ENCODE measurements at regions of chr1 and their contacts with region 1.

Region 1: DNA sequence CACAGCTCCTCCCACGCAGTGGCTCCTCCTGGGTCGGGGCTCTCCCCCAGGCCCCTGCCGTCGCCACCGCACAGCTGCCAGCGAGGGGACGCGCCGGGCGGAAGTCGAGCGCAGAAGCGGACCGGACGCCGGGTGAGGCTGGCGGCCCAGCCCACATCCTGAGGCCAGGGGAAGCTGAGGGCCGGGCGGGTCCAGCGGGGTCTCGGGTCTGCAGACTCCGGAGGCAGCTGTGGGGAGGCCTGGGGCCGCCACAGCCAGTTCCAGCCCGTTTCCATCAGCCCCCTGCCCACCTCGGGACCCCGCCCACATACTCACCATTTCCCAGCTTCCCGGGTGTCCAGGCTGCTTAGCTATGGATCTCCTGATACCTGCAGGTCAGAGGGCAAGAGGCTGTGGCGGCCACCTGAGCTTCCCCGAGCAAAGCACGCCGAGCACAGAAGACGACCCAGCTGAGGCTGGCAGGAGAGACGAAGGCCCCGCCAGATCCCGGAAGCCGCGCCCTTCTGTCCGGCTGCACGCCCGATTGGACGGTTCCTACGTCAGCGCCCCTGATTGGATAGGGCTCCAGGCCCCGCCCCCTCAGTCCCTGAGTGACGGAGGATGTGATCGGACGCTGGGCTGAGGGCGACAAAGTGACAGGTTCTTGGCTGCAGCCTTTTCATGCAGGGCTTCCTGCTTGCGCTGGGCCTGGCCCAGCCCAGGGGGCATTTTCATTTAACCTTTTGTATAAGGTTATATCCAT is 38.7 kb upstream of the ZNF124 start:
- DNase-seq: peak; percentile 98 to 99 (median 99)
- ATAC-seq: peak; percentile 100
- H3K4me3 ChIP-seq: peak overlapping the region; percentile 53 to 100 (median 83)
- H3K27ac ChIP-seq: peak overlapping the region; percentile 83 to 95 (median 91)
- H3K4me1 ChIP-seq: peaks cover 3 to 37% (median 18%) of the 10 kb centered on the region in 12 donors
- H3K27me3 ChIP-seq: no peaks in the 10 kb centered on the region
- CTCF ChIP-seq: no peak
- POLR2A ChIP-seq: peak in 1 of 2 donors; percentile 78

Region 2: GRCh38 chr1:247007511-247008405 is 202.8 kb before region 1 on chr1 and contains the start of gene ZNF695:
- intact Hi-C with region 1: no loop called
- DNase-seq: peak; percentile 88 to 91 (median 90)
- ATAC-seq: peak; percentile 99 to 100 (median 100)
- H3K4me3 ChIP-seq: peak within 1 kb of the TSS; percentile 38 to 72 (median 59)
- H3K27ac ChIP-seq: no peak within 1 kb of the TSS
- H3K4me1 ChIP-seq: peaks cover 0 to 10% (median 0%) of the 10 kb centered on the region in 12 donors
- H3K27me3 ChIP-seq: peaks cover 0 to 26% (median 0%) of the 10 kb centered on the region in 9 donors
- CTCF ChIP-seq: no peak
- POLR2A ChIP-seq: no peak
- total RNA-seq, gene ZNF695: 0.06 to 0.53 TPM in 2 of 9 donors, not detected in the others

Region 3: DNA sequence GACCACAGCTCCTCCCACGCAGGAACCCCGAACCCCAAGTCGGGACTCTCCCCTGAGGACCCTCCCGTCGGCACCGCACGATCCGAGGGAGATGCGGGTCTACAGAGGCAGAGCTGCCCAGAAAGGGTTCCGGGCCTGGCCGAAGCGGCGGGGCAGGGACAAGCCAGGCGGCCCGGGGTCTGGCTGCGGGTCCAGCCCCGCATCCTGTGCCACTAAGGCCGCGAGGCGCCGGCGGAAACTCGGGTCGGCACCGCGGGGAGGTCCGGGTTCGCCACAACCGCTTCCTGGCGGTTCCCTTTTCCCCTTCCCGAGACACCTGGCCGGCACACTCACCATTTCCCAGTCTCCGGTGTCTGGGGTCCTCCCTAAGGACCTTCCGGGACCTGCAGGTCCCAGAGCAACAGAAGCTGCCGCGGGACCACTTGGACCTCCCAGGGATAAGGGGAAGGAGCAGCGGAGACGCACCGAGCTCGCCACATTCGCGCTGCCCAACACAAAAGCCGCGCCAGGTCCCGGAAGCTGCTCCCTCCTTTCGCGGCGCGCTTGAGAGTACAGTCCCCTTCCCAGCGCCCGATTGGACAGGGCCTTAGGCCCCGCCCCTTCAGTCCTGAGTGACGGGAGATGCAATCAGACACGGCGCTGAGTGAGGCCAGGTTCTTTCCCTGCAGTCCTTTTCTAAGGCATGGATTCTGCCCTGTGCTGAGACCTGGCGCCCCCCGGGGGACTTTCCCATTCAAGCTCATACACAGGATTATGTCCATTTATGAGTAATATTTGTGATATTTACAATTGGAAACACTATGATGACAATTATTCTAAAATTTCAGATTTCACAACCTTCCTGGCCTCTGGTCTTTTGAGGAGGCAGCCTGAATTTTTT is 132.0 kb before region 1 on chr1 and contains the start of gene ZNF670:
- intact Hi-C with region 1: loop called in 1 of 10 experiments (anchors 5 kb)
- DNase-seq: peak; percentile 95 to 97 (median 96)
- ATAC-seq: peak; percentile 100
- H3K4me3 ChIP-seq: peak within 1 kb of the TSS; percentile 74 to 98 (median 88)
- H3K27ac ChIP-seq: peak within 1 kb of the TSS; percentile 47 to 84 (median 72)
- H3K4me1 ChIP-seq: peaks cover 0 to 21% (median 11%) of the 10 kb centered on the region in 12 donors
- H3K27me3 ChIP-seq: no peaks in the 10 kb centered on the region
- CTCF ChIP-seq: peak in 2 of 12 donors; percentile 3 to 16
- POLR2A ChIP-seq: peak in 1 of 2 donors; percentile 70
- total RNA-seq, gene ZNF670: 0.60 to 3.6 (median 1.0) TPM

Region 4: GRCh38 chr1:247103859-247104591 is 106.5 kb before region 1 on chr1 and contains the start of gene ZNF669:
- intact Hi-C with region 1: loop called in 2 of 10 experiments (anchors 5 to 10 kb)
- DNase-seq: peak; percentile 96 to 98 (median 98)
- ATAC-seq: peak; percentile 100
- H3K4me3 ChIP-seq: peak within 1 kb of the TSS; percentile 63 to 97 (median 86)
- H3K27ac ChIP-seq: peak within 1 kb of the TSS; percentile 48 to 90 (median 79)
- H3K4me1 ChIP-seq: peaks cover 0 to 18% (median 14%) of the 10 kb centered on the region in 12 donors
- H3K27me3 ChIP-seq: no peaks in the 10 kb centered on the region
- CTCF ChIP-seq: no peak
- POLR2A ChIP-seq: peak in 1 of 2 donors; percentile 77
- total RNA-seq, gene ZNF669: 1.5 to 5.4 (median 3.2) TPM

Region 5: GRCh38 chr1:247111700-247112478 is 98.7 kb before region 1 on chr1:
- intact Hi-C with region 1: loop called in 2 of 10 experiments (anchors 5 to 10 kb)
- DNase-seq: peak; percentile 70 to 87 (median 79)
- ATAC-seq: peak; percentile 70 to 97 (median 92)
- H3K4me3 ChIP-seq: peak overlapping the region; percentile 51 to 89 (median 72)
- H3K27ac ChIP-seq: peak overlapping the region in 11 of 12 donors; percentile 61 to 88 (median 76)
- H3K4me1 ChIP-seq: peaks cover 0 to 26% (median 11%) of the 10 kb centered on the region in 12 donors
- H3K27me3 ChIP-seq: peaks cover 0 to 16% (median 0%) of the 10 kb centered on the region in 9 donors
- CTCF ChIP-seq: no peak
- POLR2A ChIP-seq: peak in 1 of 2 donors; percentile 55

Region 6: GRCh38 chr1:247172996-247173395 is 37.6 kb before region 1 on chr1:
- intact Hi-C with region 1: loop called in 1 of 10 experiments (anchors 2 kb)
- DNase-seq: no peak
- ATAC-seq: no peak
- H3K4me3 ChIP-seq: no peak overlapping the region
- H3K27ac ChIP-seq: peak overlapping the region in 1 of 12 donors; percentile 6
- H3K4me1 ChIP-seq: peaks cover 0 to 14% (median 0%) of the 10 kb centered on the region in 12 donors
- H3K27me3 ChIP-seq: no peaks in the 10 kb centered on the region
- CTCF ChIP-seq: no peak
- POLR2A ChIP-seq: no peak

Region 7: DNA sequence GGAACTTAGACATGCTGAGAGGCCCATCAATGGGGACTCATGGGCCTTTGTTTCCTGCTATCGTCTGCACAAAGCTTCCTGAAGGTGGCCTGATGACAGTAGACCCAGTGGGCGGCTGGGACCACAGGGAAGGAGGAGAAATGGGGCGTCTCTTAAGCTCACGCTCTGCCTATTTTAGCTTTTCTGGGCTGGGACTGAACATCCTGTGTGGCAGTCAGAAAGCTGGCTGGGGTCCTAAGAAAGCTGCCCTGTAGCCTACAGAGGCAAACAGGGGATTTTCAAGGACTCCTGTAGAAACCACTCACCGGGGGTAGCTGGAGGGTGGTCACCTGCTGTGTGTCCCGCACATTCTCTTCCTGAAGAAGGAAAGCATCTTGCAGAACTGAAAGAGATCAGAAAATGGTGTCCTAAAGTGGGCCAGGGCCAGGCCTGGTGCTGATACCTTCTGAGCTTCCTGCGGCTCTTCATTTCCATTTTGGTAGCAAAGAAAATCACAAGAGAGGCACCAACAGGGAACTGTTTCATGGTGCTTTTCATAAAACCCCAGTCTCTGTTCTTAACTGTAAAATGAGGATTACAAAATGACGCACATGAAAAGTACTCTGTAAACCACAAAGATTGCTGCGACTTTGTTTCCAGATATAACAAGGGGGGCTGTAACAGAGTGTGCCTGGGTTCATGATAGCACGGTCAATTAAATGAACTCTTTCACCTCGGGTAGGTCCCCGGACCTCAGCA is 112.5 kb after region 1 on chr1:
- intact Hi-C with region 1: loop called in 1 of 10 experiments (anchors 10 kb)
- DNase-seq: no peak
- ATAC-seq: peak in 1 of 4 donors; percentile 26
- H3K4me3 ChIP-seq: no peak overlapping the region
- H3K27ac ChIP-seq: no peak overlapping the region
- H3K4me1 ChIP-seq: peaks cover 0 to 6% (median 0%) of the 10 kb centered on the region in 12 donors
- H3K27me3 ChIP-seq: no peaks in the 10 kb centered on the region
- CTCF ChIP-seq: no peak
- POLR2A ChIP-seq: no peak

Region 8: GRCh38 chr1:247331172-247331991 is 120.8 kb after region 1 on chr1 and contains the start of gene ZNF496:
- intact Hi-C with region 1: loop called in 5 of 10 experiments (anchors 5 to 10 kb)
- DNase-seq: peak; percentile 87 to 89 (median 88)
- ATAC-seq: peak; percentile 68 to 86 (median 82)
- H3K4me3 ChIP-seq: peak within 1 kb of the TSS; percentile 81 to 99 (median 97)
- H3K27ac ChIP-seq: peak within 1 kb of the TSS; percentile 82 to 98 (median 94)
- H3K4me1 ChIP-seq: peaks cover 6 to 55% (median 38%) of the 10 kb centered on the region in 12 donors
- H3K27me3 ChIP-seq: no peaks in the 10 kb centered on the region
- CTCF ChIP-seq: no peak
- POLR2A ChIP-seq: peak in 1 of 2 donors; percentile 56
- total RNA-seq, gene ZNF496: 13.2 to 37.9 (median 16.5) TPM

Region 9: GRCh38 chr1:247812637-247813036 is 602.1 kb after region 1 on chr1:
- intact Hi-C with region 1: no loop called
- DNase-seq: no peak
- ATAC-seq: no peak
- H3K4me3 ChIP-seq: no peak overlapping the region
- H3K27ac ChIP-seq: no peak overlapping the region
- H3K4me1 ChIP-seq: no peaks in the 10 kb centered on the region
- H3K27me3 ChIP-seq: no peaks in the 10 kb centered on the region
- CTCF ChIP-seq: no peak
- POLR2A ChIP-seq: no peak